A549 (cell line): ENCODE measurements at regions of chr1 and their contacts with region 1.

Region 1: DNA sequence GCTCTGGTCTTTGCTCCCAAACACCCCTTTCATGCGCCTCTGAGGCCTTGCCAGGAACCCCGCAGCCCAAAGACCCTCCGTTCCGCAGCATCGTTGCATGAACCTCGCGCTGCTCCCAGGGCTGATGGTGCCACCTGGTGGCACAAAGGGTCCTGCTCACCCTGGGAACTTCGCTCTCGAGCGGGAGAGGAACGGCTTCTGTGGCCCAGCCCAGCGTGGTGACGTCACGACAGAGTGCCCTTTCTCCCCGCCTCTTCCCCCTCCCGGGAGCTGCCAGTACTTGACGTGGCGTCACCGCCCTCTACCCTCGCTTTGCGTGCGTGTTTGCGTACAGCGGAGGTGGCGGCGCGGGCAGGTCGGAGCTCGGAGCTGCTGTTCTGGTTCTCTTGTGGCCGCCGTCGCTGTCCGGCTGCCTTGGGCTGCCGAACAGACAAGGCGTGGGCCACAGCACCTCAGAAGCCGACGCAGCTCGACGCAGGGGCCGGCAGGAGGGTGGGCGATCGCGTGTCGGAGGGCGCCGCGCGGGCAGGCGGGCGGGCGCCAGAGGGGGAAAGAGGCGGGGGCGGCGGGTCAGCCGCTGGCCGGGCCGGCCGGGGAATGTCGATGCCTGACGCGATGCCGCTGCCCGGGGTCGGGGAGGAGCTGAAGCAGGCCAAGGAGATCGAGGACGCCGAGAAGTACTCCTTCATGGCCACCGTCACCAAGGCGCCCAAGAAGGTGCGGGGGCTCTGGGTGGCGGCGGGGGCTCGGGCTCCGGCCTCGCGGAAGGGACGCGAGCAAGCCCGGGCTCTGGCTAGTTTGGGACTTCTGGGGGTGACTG is at the start of gene AHCYL1:
- DNase-seq: peak; percentile 92 to 97
- ATAC-seq: peak; percentile 84 to 89
- H3K4me3 ChIP-seq: peak within 1 kb of the TSS; percentile 89
- H3K27ac ChIP-seq: peak within 1 kb of the TSS; percentile 95 to 98
- H3K4me1 ChIP-seq: peaks cover 72% of the 10 kb centered on the region
- CTCF ChIP-seq: peak; percentile 86
- EP300 ChIP-seq: no peak
- POLR2A ChIP-seq: peak; percentile 77
- RAD21 ChIP-seq: peak; percentile 97 to 99
- polyA plus RNA-seq, gene AHCYL1: 147 and 148 TPM in 2 replicates

Region 2: DNA sequence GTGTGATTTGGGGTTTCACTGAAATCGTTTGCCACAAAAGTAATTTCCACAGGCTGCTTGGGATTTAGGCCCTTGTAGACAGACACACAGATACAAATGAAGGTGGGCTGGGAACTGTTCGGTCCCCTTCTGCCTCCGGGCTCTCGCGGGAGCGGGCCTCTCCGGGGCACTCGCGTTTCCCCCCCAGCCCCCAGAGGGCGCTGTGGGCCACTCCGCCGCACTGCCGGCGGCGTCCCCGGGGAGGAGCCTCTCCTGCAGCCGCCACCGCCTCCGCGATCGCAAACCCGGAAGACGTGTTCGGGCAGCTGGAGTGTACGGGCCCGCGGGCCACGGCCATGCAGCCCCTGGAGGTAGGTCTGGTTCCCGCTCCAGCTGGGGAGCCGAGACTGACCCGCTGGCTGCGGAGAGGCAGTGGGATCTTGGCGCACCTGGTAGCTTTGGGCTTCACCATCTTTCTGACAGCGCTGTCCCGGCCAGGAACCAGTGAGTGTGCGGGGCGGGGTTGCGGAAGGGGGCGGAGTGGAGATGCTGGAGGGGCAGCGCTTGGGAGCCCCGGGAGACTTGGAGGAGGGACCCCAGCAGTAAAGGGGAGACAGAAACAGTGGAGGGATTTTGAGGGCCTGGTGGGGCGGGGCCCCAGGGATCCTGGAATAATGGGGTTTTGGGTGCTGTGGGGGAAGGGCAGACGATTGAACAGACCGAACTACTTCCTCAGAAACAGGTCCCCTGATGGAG is 490.7 kb before region 1 on chr1 and contains the start of gene CYB561D1:
- CTCF ChIA-PET with region 1: interaction called, 10 read pairs
- POLR2A ChIA-PET with region 1: no interaction called
- DNase-seq: peak; percentile 52 to 78
- ATAC-seq: peak; percentile 83 to 94
- H3K4me3 ChIP-seq: peak within 1 kb of the TSS; percentile 75
- H3K27ac ChIP-seq: peak within 1 kb of the TSS; percentile 85 to 98
- H3K4me1 ChIP-seq: peaks cover 6% of the 10 kb centered on the region; the same call in 1 of the 3 replicates
- CTCF ChIP-seq: peak; percentile 82
- EP300 ChIP-seq: no peak
- POLR2A ChIP-seq: peak; percentile 66
- RAD21 ChIP-seq: peak; percentile 16 to 34; a peak in 3 of 5 replicates
- polyA plus RNA-seq, gene CYB561D1: 4.0 and 4.9 TPM in 2 replicates

Region 3: DNA sequence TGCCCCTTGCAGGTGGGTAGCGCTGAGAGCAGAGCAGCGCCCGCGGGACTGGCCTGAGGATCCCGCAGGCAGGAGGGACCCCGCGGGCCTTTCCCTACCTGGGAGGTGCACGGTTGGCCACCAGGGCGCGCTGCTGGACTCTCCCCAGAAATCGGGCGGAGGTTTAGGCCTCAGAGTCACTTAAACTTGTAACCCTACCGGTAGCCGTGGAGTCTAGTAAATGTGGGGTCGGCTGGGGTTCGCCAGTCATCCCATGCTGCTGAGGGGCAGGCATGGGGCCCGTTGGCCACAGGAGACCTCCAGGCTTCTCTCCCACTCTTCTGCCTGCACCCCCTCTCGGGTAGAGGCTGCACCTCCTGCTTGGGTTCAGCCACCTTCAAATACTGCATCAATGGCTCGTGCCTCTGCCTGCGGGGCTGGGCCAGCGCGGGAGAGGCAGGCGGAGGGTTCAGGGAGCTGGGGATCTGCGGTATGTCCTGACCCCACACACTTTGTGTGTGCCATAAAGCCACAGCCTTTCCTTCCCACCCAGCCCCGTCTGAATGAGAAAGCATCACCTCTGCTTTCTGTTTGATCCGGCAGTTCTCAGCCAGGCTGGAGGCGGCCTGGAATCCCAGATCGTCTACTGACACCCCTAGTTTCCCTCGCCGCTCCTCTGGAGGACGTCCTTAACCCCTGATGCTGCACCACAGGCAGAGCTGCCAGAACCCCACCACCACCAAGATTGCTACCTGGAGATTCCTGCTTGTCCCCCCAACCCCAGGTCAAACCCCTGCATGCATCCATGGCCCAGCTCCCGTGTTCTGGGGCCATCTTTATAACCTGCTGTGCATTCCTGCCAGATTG is 341.1 kb before region 1 on chr1:
- CTCF ChIA-PET with region 1: interaction called, 53 read pairs
- POLR2A ChIA-PET with region 1: interaction called, 3 read pairs
- DNase-seq: peak; percentile 59 to 75
- ATAC-seq: peak; percentile 96 to 98
- H3K4me3 ChIP-seq: no peak overlapping the region
- H3K27ac ChIP-seq: peak overlapping the region; percentile 73 to 80
- H3K4me1 ChIP-seq: peaks cover 9% of the 10 kb centered on the region; the same call in 2 of the 3 replicates
- CTCF ChIP-seq: peak; percentile 76
- EP300 ChIP-seq: no peak
- POLR2A ChIP-seq: no peak
- RAD21 ChIP-seq: peak; percentile 67 to 74

Region 4: DNA sequence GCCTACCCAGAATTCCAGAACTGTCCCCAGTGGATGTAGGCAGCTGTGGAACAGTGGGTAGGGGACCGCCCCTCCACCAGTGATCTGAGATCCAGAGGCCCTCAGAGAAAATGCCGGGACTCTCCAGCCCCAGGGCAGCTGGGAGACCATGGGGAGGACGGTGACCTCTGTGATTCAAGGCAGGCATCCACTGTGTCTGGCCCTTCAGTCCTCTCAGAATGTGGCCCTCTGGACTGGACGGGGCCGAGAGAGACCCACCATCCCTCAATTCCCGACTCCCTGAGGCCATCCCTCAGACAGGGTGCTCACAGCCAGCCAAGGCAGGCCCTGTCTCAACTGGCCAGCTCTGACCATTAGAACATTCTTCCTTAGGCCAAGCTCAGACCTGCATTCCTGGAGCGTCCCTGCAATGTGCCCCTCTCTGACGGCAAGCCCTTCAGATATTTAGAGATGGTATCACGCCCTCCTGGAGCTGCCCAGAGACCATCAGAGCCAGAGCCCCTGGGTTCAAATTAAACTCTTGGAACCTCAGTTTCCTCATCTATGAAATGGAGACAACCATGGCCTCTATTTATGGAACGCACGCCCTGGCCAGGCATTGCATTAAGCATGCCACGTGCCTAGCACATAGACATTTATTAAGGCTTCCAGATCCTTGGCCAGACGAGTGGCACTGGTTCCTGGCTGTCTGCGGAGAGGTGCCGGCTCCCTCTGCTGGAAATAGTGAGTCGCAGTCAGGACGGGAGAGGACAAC is 211.3 kb before region 1 on chr1:
- CTCF ChIA-PET with region 1: interaction called, 969 read pairs
- POLR2A ChIA-PET with region 1: interaction called, 23 read pairs
- DNase-seq: peak; percentile 73 to 78
- ATAC-seq: peak; percentile 82 to 88
- H3K4me3 ChIP-seq: no peak overlapping the region
- H3K27ac ChIP-seq: peak overlapping the region; percentile 3 to 77; a peak in 3 of 6 replicates
- H3K4me1 ChIP-seq: peaks cover 35% of the 10 kb centered on the region
- CTCF ChIP-seq: peak; percentile 70
- EP300 ChIP-seq: no peak
- POLR2A ChIP-seq: no peak
- RAD21 ChIP-seq: peak; percentile 87 to 91

Region 5: DNA sequence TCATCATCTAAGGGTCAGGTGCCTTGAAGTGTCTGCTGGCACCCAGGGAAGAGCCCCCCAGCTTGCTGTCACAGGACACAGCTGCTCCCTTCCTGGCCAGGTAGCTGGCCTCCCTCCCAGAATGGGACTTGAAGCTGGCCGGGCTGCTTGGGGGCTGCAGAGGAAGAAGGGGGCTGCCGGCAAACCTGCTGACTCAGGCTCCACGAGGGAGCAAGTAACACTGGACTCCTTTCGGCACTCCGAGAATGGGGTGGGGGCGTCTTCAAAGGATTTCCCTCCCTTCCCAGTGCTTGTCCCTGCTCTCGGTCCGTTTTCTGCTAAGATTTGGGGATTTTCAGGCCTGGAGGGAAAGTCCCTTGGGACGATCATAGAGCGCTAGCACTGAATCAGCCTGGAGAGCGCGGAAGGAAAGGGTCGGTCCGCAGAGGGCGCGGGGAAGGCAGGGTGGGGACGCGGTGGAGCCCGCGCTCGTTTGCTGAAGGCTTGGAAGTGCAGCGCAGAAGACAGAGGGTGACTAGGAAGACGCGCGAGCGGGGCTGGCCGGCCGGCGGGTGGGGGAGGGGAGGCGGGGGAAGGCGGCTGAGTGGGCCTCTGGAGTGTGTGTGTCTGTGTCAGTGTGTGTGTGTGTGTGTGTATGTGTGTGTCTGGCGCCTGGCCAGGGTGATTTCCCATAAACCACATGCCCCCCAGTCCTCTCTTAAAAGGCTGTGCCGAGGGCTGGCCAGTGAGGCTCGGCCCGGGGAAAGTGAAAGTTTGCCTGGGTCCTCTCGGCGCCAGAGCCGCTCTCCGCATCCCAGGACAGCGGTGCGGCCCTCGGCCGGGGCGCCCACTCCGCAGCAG is 74.3 kb before region 1 on chr1 and contains the start of gene CSF1:
- CTCF ChIA-PET with region 1: interaction called, 63 read pairs
- POLR2A ChIA-PET with region 1: no interaction called
- DNase-seq: peak; percentile 42 to 78
- ATAC-seq: peak; percentile 74 to 79
- H3K4me3 ChIP-seq: peak within 1 kb of the TSS; percentile 99
- H3K27ac ChIP-seq: peak within 1 kb of the TSS; percentile 100
- H3K4me1 ChIP-seq: peaks cover 42% of the 10 kb centered on the region
- CTCF ChIP-seq: no peak
- EP300 ChIP-seq: no peak
- POLR2A ChIP-seq: no peak
- RAD21 ChIP-seq: peak in 1 of 2 experiments; percentile 40; a peak in 2 of 5 replicates
- polyA plus RNA-seq, gene CSF1: 36.3 and 45.7 TPM in 2 replicates

Region 6: DNA sequence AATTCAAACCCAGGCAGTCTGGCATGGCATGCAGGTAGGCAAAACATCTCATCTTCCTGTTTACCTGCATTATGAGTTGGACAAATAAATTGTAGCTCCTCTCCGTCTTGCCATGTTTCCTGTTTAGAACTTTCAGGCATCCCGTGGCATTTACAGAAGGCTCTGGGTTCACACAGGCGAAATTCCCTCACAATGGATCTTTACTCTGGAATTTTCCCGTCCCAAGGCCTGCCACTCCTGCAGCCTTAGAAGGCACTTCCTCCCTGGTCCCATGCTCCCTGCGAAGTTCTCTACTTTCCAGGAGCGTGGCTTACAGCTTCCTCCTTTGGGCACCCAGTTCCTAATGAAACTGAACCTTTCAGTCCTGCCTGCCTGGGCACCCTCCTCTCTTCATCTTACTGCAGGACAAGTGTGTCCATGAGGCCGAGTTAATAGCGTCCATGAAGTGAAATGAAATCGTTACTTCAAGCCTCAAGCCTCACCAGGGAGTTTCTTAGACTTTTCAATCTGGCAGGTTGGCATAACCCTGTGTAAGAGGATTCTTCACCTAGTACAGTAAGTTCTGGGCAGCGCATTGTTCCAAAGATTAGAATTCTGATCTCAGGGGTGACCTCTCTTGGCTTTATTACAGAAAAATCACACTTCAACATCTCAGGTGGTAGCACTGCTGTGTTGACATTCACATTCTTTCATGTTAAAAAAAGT is 36.9 kb before region 1 on chr1:
- CTCF ChIA-PET with region 1: interaction called, 38 read pairs
- POLR2A ChIA-PET with region 1: no interaction called
- DNase-seq: no peak
- ATAC-seq: peak; percentile 34 to 58; a peak in 4 of 6 replicates
- H3K4me3 ChIP-seq: no peak overlapping the region
- H3K27ac ChIP-seq: peak overlapping the region; percentile 64 to 84
- H3K4me1 ChIP-seq: peaks cover 32% of the 10 kb centered on the region
- CTCF ChIP-seq: no peak
- EP300 ChIP-seq: no peak
- POLR2A ChIP-seq: no peak
- RAD21 ChIP-seq: no peak

Region 7: GRCh38 chr1:110019770-110020169 is 35.1 kb after region 1 on chr1:
- CTCF ChIA-PET with region 1: interaction called, 15 read pairs
- POLR2A ChIA-PET with region 1: no interaction called
- DNase-seq: no peak
- ATAC-seq: no peak
- H3K4me3 ChIP-seq: no peak overlapping the region
- H3K27ac ChIP-seq: no peak overlapping the region
- H3K4me1 ChIP-seq: no peaks in the 10 kb centered on the region
- CTCF ChIP-seq: no peak
- EP300 ChIP-seq: no peak
- POLR2A ChIP-seq: no peak
- RAD21 ChIP-seq: no peak